K562 (cell line): ENCODE measurements at regions of chr21 and their contacts with region 1.

Region 1: DNA sequence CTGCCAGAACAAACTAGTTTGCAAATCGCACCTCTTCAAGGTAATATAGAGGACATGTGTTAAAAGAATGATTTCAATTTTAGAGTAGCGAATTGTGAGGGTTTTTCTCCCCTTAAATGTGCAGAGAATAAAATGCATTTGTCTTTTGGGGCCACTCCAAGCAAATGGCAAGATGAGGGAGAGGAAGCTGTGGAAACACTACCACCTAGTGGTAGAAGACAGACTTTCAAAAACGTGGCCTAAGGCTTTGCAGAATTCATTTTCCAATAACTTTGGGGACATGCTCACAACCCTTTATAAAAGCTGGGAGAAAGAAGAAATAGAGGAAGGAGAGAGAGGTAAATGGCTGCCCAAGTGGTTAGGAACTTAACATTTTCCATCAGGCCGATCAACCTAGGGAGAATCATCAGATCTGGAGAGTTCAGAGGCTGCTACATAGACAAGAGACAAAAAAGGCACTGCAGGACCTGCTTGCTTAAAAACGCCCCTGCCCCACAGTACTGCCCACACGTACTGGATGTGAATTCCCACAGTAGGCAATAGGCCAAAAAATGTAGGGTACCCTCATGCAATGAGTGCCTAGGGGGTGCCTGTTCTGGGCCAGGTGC is 15.7 kb upstream of the RCAN1 start:
- DNase-seq: peak; percentile 72 to 78 (median 76)
- ATAC-seq: peak; percentile 88
- H3K4me3 ChIP-seq: no peak overlapping the region
- H3K27ac ChIP-seq: no peak overlapping the region
- H3K4me1 ChIP-seq: no peaks in the 10 kb centered on the region
- H3K27me3 ChIP-seq: peaks cover 16 to 31% of the 10 kb centered on the region in 2 experiments
- CTCF ChIP-seq: peak; percentile 80 to 96 (median 88)
- EP300 ChIP-seq: no peak
- POLR2A ChIP-seq: no peak
- RAD21 ChIP-seq: peak; percentile 96 to 98

Region 2: DNA sequence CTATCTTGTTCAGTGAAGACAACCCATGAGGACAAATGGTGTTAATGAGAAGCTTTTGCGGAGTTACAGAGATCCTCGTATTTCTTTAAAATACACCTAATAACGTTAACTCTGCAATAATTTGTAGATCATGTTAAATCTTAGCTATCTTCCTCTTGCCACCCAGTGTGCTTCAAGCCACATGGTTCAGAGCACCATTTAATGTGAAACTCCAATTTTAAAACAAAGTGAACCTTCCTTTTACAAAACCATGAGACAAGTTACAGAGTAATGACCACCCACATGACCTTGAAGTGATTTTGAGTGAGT is 268.6 kb before region 1 on chr21:
- CTCF ChIA-PET with region 1: interaction called, 14 read pairs
- POLR2A ChIA-PET with region 1: no interaction called
- in situ Hi-C with region 1: no loop called
- intact Hi-C with region 1: loop called (anchors 1 kb)
- DNase-seq: no peak
- ATAC-seq: peak; percentile 15
- H3K4me3 ChIP-seq: no peak overlapping the region
- H3K27ac ChIP-seq: no peak overlapping the region
- H3K4me1 ChIP-seq: peaks cover 0 to 2% of the 10 kb centered on the region in 2 experiments; a peak in 2 of 5 replicates
- H3K27me3 ChIP-seq: peaks cover 0 to 6% of the 10 kb centered on the region in 2 experiments; a peak in 2 of 5 replicates
- CTCF ChIP-seq: no peak
- EP300 ChIP-seq: no peak
- POLR2A ChIP-seq: no peak
- RAD21 ChIP-seq: no peak

Region 3: DNA sequence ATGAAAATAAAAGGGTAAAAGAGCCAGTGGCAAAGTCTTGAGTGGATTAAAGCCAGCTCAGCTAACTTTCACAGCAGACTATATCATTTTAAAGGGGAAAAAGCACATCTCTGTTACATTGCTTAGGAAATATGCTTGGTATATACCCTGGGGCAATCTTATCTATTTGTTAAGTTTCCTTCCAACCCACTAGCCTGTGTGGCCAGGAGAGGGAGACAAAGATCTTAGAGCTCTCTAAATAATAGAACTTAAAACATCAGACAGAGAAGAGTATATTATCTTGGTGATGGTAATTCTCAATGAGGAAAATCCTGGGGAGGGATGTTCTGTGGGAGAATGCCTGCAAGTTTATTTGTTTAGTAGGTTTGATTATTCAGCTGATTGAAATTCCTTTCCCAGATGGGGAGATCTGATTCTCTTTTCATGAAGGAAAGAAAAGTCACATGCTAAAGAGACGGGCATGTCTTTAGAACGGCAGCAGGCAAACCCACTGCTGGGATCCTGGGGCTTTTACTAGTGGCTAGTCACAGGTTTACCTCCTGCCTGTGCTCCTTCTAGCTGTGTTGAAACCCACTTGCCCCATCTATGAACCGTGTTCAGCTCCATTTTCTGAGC is 263.2 kb before region 1 on chr21:
- CTCF ChIA-PET with region 1: interaction called, 11 read pairs
- POLR2A ChIA-PET with region 1: no interaction called
- in situ Hi-C with region 1: no loop called
- intact Hi-C with region 1: loop called (anchors 1 kb)
- DNase-seq: peak in 2 of 4 experiments; percentile 62 to 77
- ATAC-seq: peak; percentile 95
- H3K4me3 ChIP-seq: no peak overlapping the region
- H3K27ac ChIP-seq: no peak overlapping the region
- H3K4me1 ChIP-seq: no peaks in the 10 kb centered on the region
- H3K27me3 ChIP-seq: peaks cover 5 to 7% of the 10 kb centered on the region in 2 experiments; a peak in 3 of 5 replicates
- CTCF ChIP-seq: peak; percentile 66 to 90 (median 78)
- EP300 ChIP-seq: no peak
- POLR2A ChIP-seq: no peak
- RAD21 ChIP-seq: peak; percentile 61 to 75

Region 4: DNA sequence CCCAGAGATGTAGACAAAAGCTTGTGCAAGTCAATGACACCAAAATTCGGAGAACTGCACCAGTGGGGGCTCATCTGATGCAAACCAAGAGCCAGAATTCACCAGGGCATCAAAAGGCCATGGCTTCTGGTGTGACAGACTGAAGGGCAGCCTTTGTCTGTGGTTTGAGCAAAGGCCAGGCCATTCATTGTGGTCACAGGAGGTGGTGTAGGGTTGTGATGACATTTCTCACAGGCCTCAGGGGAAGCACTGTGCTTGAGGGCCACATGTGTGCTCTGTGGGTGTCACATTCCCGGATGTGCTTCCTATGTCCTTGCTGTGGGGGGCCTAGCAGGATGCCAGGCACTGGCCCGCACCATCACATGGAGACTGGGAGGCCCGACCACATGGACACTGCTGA is 96.1 kb before region 1 on chr21:
- CTCF ChIA-PET with region 1: no interaction called
- POLR2A ChIA-PET with region 1: no interaction called
- in situ Hi-C with region 1: no loop called
- intact Hi-C with region 1: no loop called
- DNase-seq: no peak
- ATAC-seq: no peak
- H3K4me3 ChIP-seq: no peak overlapping the region
- H3K27ac ChIP-seq: no peak overlapping the region
- H3K4me1 ChIP-seq: no peaks in the 10 kb centered on the region; a peak in 1 of 5 replicates
- H3K27me3 ChIP-seq: peaks cover 0 to 12% of the 10 kb centered on the region in 2 experiments; a peak in 1 of 5 replicates
- CTCF ChIP-seq: no peak
- EP300 ChIP-seq: no peak
- POLR2A ChIP-seq: no peak
- RAD21 ChIP-seq: no peak

Region 5: DNA sequence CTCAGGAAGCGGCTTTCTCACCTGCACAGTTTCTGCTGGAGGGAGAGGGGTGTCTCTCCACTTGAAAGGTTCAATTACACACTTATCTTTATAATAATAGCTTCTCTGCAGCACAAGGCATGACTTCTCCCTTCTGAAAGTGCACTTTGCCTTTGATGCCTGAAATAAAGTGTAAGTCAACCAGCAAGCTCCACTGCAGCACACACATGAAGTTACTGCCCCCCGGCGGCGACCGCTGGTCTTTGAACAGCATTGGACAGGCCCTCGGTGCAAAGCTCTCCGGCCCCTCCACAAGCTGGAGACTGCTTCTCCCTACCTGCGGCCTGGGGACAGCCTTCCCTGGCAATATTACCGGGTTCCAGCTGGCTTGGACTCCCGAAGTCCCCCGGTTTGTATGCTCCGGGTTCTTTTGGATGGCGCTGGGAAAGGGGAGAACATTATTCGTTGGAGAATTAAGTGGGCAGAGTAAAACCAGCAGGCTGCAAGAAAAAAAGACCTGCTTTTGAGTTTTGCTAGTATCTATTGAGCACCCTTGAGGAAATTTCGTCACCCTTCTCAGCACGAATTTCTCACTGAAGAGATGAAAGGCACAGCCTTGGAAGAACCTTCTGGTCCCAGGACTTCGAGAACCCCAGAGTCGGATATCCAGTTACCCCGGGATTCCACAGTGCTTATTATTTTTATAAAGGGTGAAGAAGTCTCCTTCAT is 27.5 kb before region 1 on chr21:
- CTCF ChIA-PET with region 1: interaction called, 8 read pairs
- POLR2A ChIA-PET with region 1: interaction called, 4 read pairs
- in situ Hi-C with region 1: no loop called
- intact Hi-C with region 1: loop called (anchors 2 kb)
- DNase-seq: peak; percentile 60 to 84 (median 69)
- ATAC-seq: peak; percentile 100
- H3K4me3 ChIP-seq: no peak overlapping the region
- H3K27ac ChIP-seq: no peak overlapping the region
- H3K4me1 ChIP-seq: no peaks in the 10 kb centered on the region; a peak in 1 of 5 replicates
- H3K27me3 ChIP-seq: no peaks in the 10 kb centered on the region; a peak in 1 of 5 replicates
- CTCF ChIP-seq: peak; percentile 85 to 94 (median 91)
- EP300 ChIP-seq: no peak
- POLR2A ChIP-seq: no peak
- RAD21 ChIP-seq: peak; percentile 92 to 96

Region 6: DNA sequence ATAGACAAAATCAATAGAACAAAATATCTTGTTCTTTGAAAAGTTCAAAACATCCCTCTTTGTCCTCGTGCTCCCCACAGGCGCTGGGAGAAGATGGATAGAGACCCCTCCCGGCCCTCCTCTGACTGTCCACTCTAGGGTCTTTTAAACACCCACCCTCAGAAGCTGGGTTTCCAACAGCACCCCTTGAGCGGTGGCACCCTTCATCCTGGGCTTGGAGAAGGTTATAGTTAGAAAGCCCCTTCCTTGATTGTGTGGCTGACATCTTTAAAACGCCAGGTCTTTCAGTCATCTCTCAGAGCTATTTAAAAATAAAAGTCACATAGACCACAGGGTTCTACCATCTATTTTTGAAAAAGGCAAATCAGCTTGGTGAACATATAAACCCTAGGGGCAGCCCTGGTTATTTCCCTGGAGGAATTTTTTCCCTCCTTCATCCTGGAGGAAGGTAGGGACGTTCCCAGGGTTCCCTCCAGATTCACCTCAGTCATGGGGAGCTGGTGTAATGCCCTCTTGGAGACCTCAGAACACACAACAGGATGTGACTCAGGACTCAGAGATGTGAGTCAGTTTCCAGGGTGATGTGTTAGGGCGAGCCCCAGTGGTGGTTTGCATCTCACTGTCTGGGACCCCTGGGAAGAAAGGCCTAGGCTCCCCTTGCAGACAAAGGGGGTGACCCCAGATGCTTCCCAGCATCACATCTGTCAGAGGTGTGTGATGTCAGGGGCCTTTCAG is 176.7 kb after region 1 on chr21:
- CTCF ChIA-PET with region 1: no interaction called
- POLR2A ChIA-PET with region 1: no interaction called
- in situ Hi-C with region 1: no loop called
- intact Hi-C with region 1: no loop called
- DNase-seq: no peak
- ATAC-seq: peak; percentile 45
- H3K4me3 ChIP-seq: no peak overlapping the region
- H3K27ac ChIP-seq: 0 out of 3 replicates have a peak overlapping the region, but pooled peaks have one; percentile 23
- H3K4me1 ChIP-seq: no peaks in the 10 kb centered on the region
- H3K27me3 ChIP-seq: no peaks in the 10 kb centered on the region
- CTCF ChIP-seq: no peak
- EP300 ChIP-seq: no peak
- POLR2A ChIP-seq: no peak
- RAD21 ChIP-seq: no peak